ENCODE measurements at regions of chr7 and their contacts with region 1.

Region 1: GRCh38 chr7:123154231-123154860 is 45.4 kb downstream of the SLC13A1 start:
- DNase-seq: peak; percentile 82
- H3K4me3 Mint-ChIP-seq: no peak overlapping the region
- H3K27ac Mint-ChIP-seq: no peak overlapping the region
- H3K4me1 Mint-ChIP-seq: peaks cover 1% of the 10 kb centered on the region
- H3K27me3 Mint-ChIP-seq: no peaks in the 10 kb centered on the region
- CTCF ChIP-seq: peak; percentile 76

Region 2: DNA sequence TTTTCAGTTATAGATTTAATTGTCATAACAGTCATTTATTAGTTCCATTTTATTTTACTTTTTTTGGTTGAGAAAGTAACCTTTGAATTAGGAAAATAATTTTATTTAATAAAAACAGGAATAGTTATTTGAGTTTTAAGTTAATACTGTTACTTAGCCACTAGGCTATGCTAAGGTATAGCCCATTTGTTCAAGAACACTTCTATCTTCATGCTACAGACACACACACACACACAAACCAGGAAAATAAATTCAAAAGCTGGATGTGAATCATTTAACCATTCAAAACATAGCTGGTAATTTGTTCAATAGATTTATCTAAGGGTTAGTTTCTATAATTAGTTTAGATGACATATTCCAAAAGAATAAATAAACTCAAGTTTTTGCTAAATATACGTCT is 603.8 kb before region 1 on chr7:
- CTCF ChIA-PET with region 1: interaction called, 3 read pairs
- intact Hi-C with region 1: loop called (anchors 5 kb)
- DNase-seq: no peak
- H3K4me3 Mint-ChIP-seq: no peak overlapping the region
- H3K27ac Mint-ChIP-seq: no peak overlapping the region
- H3K4me1 Mint-ChIP-seq: no peaks in the 10 kb centered on the region
- H3K27me3 Mint-ChIP-seq: no peaks in the 10 kb centered on the region
- CTCF ChIP-seq: no peak

Region 3: DNA sequence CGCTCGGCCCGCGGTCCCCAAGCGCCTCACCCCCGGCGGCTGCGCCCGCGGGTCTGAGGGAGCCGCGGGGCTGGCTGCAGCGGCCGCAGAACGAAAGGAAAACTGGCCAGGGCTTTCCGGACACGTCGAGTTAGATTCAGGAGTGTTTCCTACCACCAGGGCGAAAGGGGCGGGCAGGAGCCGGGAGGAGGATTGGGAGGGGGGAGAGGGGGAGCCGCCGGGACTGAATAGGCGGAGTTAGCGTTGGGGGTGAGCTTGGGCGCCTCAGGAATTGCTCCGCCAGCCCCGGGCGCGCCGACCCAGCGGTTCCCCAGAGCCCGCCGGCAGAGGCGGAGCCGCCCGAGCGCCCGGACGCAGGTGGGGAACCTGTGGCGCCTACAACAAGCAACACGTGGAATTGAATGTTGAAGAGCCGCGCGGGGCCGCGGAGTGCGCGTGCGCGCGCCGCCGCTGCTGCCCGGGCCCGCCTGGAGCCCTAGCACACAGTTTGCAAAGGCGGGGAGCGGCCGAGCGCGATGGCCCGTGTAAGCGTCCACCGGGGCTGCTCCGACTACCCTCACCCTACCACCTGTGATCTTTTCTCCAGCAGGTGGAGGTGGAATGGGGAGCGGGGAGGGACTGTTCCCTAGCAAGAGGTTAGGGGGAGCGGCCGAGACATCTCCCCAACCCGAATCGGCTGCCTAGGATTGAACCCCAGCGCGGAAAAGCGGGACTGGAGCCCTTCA is 267.8 kb before region 1 on chr7 and contains the start of gene CADPS2:
- CTCF ChIA-PET with region 1: no interaction called
- intact Hi-C with region 1: loop called (anchors 2 kb)
- DNase-seq: peak; percentile 91
- H3K4me3 Mint-ChIP-seq: peak within 1 kb of the TSS; percentile 95
- H3K27ac Mint-ChIP-seq: peak within 1 kb of the TSS; percentile 81
- H3K4me1 Mint-ChIP-seq: peaks cover 18% of the 10 kb centered on the region
- H3K27me3 Mint-ChIP-seq: no peaks in the 10 kb centered on the region
- CTCF ChIP-seq: no peak
- total RNA-seq, gene CADPS2: 14.1 and 16.4 TPM in 2 replicates

Region 4: DNA sequence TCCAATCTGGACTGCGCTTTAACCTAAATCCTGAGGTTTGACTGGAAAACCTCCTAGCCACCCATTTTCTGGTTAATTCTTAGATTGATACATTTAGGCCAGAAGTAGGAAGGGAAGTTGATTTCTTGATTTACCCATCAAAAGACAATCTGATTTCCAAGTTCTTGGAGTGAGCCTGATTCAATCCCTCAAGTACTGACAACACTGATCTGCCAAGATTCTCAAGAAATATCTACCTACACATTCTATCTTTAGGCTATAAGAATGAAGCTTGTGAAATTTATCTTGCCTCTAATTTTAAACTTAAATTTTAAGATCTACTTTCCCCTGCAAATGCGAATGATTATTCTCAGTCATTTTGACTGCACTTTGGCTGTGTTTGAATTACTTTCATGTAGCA is 164.8 kb before region 1 on chr7:
- CTCF ChIA-PET with region 1: no interaction called
- intact Hi-C with region 1: no loop called
- DNase-seq: no peak
- H3K4me3 Mint-ChIP-seq: no peak overlapping the region
- H3K27ac Mint-ChIP-seq: no peak overlapping the region
- H3K4me1 Mint-ChIP-seq: no peaks in the 10 kb centered on the region
- H3K27me3 Mint-ChIP-seq: peaks cover 19% of the 10 kb centered on the region
- CTCF ChIP-seq: no peak

Region 5: GRCh38 chr7:123070702-123071286 is 83.6 kb before region 1 on chr7:
- CTCF ChIA-PET with region 1: no interaction called
- intact Hi-C with region 1: loop called (anchors 2 kb)
- DNase-seq: peak; percentile 18
- H3K4me3 Mint-ChIP-seq: no peak overlapping the region
- H3K27ac Mint-ChIP-seq: no peak overlapping the region
- H3K4me1 Mint-ChIP-seq: no peaks in the 10 kb centered on the region
- H3K27me3 Mint-ChIP-seq: no peaks in the 10 kb centered on the region
- CTCF ChIP-seq: no peak

Region 6: GRCh38 chr7:123112833-123113232 is 41.5 kb before region 1 on chr7:
- CTCF ChIA-PET with region 1: no interaction called
- intact Hi-C with region 1: no loop called
- DNase-seq: no peak
- H3K4me3 Mint-ChIP-seq: no peak overlapping the region
- H3K27ac Mint-ChIP-seq: no peak overlapping the region
- H3K4me1 Mint-ChIP-seq: no peaks in the 10 kb centered on the region
- H3K27me3 Mint-ChIP-seq: no peaks in the 10 kb centered on the region
- CTCF ChIP-seq: no peak

Region 7: GRCh38 chr7:123367484-123368122 is 213.3 kb after region 1 on chr7:
- CTCF ChIA-PET with region 1: interaction called, 6 read pairs
- intact Hi-C with region 1: loop called (anchors 2 kb)
- DNase-seq: peak; percentile 24
- H3K4me3 Mint-ChIP-seq: no peak overlapping the region
- H3K27ac Mint-ChIP-seq: no peak overlapping the region
- H3K4me1 Mint-ChIP-seq: no peaks in the 10 kb centered on the region
- H3K27me3 Mint-ChIP-seq: no peaks in the 10 kb centered on the region
- CTCF ChIP-seq: peak; percentile 66